ENCODE measurements at regions of chr1 and their contacts with region 1.

Region 1: DNA sequence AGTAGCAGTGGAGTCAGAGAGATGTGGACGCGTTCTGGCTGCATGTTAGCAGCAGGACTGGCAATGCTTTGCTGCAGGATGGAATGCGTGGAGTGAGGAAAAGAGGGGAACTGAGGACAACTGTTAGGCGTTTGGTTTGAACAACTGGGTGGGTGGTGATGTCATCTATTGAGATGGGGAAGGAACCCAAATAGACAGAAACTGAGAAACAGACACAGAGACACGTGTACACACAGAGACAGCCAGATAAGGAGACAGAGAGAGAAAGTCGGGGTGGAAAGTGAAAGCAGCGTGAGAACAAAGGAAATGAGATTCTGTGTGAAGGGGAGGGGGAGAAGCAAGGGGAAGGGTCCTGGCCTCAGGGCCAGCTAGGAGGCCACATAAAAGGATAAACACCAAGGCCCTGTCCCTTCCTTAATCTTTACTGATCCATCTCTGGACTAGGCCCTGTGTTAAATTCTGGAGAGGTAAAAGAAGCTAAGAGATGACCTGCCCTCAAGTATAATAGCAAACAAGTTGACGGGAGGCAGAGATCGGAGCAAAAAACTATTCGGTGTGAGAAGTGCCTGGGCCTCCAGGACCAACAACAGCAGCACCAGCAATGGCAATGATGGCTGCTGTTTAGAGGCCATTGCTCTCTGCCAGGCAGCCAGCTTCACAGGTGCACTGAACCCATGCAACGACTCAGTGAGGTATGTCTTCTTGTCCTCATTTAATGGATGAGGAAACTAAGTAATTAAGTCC is 31.6 kb downstream of the VWA5B1 start:
- DNase-seq: peak; percentile 78
- H3K4me3 Mint-ChIP-seq: peak overlapping the region; percentile 44
- H3K27ac Mint-ChIP-seq: peak overlapping the region; percentile 12
- H3K4me1 Mint-ChIP-seq: peaks cover 23% of the 10 kb centered on the region
- H3K27me3 Mint-ChIP-seq: peaks cover 25% of the 10 kb centered on the region

Region 2: GRCh38 chr1:20290624-20291597 is 31.3 kb before region 1 on chr1 and contains the start of gene VWA5B1:
- intact Hi-C with region 1: no loop called
- DNase-seq: no peak
- H3K4me3 Mint-ChIP-seq: peak within 1 kb of the TSS; percentile 49
- H3K27ac Mint-ChIP-seq: no peak within 1 kb of the TSS
- H3K4me1 Mint-ChIP-seq: peaks cover 10% of the 10 kb centered on the region
- H3K27me3 Mint-ChIP-seq: peaks cover 53% of the 10 kb centered on the region
- total RNA-seq, gene VWA5B1: not detected in 2 replicates

Region 3: DNA sequence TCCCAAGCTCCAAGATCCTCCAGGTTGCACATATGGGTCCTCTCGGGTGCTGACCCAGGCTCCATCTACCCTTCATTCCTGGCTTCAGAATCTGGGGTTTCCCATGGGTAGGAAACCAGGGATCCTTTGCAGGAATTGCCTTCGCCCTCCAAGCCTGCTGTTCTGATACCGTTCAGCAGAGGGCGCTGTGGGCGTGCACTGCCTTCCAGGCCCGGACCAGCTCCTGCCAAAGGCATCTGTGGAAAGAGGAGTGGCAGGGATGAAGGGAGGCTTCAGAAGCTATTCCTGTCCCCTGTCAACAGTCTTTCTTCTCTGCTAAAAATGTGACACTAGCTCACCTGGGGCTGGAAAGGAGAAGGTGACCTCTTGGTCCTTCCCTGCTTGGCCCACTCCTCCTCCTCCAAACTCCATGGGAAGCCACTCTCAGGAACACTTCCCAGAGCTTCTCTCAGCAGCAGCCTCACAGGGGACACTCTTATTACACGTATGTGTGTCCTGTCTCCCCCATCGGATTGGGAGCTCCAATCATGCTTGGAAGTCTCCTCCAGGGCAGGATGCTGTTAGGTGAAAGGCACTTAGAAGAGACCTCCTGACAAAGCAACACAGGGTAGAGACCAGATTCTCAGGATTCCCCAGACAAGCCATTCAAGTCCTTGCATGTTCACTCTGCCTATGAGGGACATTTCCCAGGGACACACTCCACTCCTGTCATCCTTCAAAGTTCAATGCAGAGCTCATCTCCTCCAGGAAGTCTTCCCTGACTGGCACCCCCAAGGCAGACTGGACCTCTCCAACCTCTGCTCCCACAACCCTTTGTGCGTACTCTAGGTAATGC is 39.8 kb after region 1 on chr1:
- intact Hi-C with region 1: loop called (anchors 5 kb)
- DNase-seq: peak; percentile 76
- H3K4me3 Mint-ChIP-seq: no peak overlapping the region
- H3K27ac Mint-ChIP-seq: no peak overlapping the region
- H3K4me1 Mint-ChIP-seq: peaks cover 3% of the 10 kb centered on the region
- H3K27me3 Mint-ChIP-seq: peaks cover 55% of the 10 kb centered on the region

Region 4: DNA sequence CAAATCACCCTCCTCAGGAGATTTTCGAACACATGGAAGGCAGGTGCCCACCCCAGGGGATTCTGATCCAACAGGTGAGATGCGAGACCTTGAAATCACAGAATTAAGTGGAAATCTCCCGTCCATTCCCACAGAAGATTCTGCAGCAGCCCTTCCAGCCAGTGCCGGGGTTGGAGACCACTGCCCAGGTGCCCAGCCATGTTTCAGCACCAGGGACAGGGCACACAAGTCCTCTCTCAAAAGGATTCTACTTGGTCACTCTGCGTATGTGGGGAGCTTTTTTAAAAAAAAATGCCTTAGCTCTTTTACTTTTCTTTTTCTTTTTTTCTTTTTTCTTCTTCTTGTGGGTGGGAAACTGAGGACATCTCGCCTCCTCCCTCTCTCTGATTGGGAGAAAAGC is 49.2 kb after region 1 on chr1:
- intact Hi-C with region 1: loop called (anchors 5 kb)
- DNase-seq: no peak
- H3K4me3 Mint-ChIP-seq: no peak overlapping the region
- H3K27ac Mint-ChIP-seq: no peak overlapping the region
- H3K4me1 Mint-ChIP-seq: peaks cover 6% of the 10 kb centered on the region
- H3K27me3 Mint-ChIP-seq: peaks cover 32% of the 10 kb centered on the region

Region 5: GRCh38 chr1:20625176-20626097 is 303.2 kb after region 1 on chr1:
- intact Hi-C with region 1: no loop called
- DNase-seq: no peak
- H3K4me3 Mint-ChIP-seq: no peak overlapping the region
- H3K27ac Mint-ChIP-seq: no peak overlapping the region
- H3K4me1 Mint-ChIP-seq: no peaks in the 10 kb centered on the region
- H3K27me3 Mint-ChIP-seq: peaks cover 16% of the 10 kb centered on the region

Region 6: DNA sequence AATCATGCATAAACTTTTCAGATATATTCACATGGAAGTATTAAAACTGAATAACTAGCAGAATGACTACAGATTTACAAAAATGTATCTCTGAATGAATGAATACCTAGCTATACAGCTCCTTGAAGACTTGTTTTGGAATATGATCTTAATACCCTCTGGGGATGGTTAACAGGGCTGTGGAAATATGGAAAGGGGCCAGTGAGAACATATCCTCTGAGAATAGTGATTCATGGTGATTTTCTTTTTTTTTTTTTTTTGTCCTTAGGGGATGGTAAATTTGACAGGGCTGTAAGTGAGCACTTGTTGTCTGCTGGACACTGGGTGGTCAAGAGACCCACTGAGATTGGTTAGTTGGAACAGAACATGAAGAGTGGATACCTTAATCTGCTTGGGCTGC is 545.6 kb after region 1 on chr1:
- intact Hi-C with region 1: no loop called
- DNase-seq: no peak
- H3K4me3 Mint-ChIP-seq: no peak overlapping the region
- H3K27ac Mint-ChIP-seq: no peak overlapping the region
- H3K4me1 Mint-ChIP-seq: peaks cover 4% of the 10 kb centered on the region
- H3K27me3 Mint-ChIP-seq: no peaks in the 10 kb centered on the region

Measured in activated CD4-positive, alpha-beta T cell treated with anti-CD3 and anti-CD28 coated beads, Interleukin-2, amount 10 ng/mL, durations not matched to agents 24 days and 14 days (primary cell).